ENCODE measurements at regions of chr4 and their contacts with region 1.

Region 1: DNA sequence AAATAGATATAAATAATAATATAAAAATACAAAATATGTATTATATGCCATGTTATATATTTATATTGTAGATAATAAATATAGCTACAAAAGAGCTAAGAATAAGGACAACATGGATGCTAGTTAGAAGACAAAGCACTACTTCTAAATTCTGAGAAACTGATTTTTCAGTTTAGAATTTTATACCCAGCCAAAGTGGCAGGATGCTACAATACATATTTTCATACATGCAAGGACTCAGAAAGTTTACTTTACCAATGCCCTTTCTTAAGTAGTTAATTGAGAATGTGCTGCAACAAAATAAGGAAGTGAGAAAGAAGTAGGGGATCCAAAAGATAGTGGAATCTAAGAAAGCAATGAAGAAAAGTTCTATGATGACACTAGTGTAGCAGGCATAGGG is 64.5 kb downstream of the PDE5A start:
- DNase-seq: no peak

Region 2: GRCh38 chr4:119314356-119314755 is 249.8 kb before region 1 on chr4:
- intact Hi-C with region 1: no loop called
- DNase-seq: peak in 20 of 42 donors; percentile 13 to 72 (median 34)

Region 3: DNA sequence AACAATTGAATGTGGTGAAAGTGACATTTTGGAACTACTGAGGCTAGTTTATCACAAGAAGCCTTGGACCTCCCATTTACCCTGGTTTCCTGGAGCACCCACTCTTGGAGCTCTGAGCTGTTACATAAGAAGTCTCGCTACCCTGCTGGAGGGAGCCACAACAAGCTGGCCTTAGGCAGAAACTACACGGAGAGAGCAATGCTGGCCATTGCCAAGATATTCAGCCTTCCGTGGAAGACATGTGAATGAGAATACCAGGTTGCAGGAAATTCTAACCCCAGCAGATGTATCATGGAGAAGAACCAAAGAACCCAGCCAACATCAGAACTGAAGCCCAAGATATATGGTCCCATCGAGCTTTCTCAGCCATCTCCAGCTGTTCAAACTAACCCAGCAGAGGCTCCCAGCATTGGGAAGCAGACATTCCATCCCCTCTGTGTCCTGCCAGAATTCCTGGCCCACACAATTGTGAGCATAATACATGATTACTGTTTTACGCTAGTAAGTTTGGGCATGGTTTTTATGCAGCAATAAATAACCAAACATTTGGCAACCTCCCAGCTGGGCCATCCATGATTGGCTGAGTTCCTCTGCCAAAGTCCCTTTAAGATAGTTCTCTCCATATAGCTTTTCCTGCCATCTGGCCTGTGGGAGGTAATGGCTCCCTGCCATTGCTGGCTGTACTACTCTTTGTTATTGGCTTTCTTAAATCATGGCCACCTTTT is 82.4 kb after region 1 on chr4:
- intact Hi-C with region 1: no loop called
- DNase-seq: peak in 1 of 42 donors; percentile 17

Region 4: GRCh38 chr4:120049732-120050494 is 485.8 kb after region 1 on chr4:
- intact Hi-C with region 1: loop called (anchors 10 kb)
- DNase-seq: peak; percentile 32 to 95 (median 84)

Measured in head of caudate nucleus (tissue), 42 donors.